CD4-positive, alpha-beta memory T cell (primary cell): ENCODE measurements at regions of chr3 and their contacts with region 1.

Region 1: DNA sequence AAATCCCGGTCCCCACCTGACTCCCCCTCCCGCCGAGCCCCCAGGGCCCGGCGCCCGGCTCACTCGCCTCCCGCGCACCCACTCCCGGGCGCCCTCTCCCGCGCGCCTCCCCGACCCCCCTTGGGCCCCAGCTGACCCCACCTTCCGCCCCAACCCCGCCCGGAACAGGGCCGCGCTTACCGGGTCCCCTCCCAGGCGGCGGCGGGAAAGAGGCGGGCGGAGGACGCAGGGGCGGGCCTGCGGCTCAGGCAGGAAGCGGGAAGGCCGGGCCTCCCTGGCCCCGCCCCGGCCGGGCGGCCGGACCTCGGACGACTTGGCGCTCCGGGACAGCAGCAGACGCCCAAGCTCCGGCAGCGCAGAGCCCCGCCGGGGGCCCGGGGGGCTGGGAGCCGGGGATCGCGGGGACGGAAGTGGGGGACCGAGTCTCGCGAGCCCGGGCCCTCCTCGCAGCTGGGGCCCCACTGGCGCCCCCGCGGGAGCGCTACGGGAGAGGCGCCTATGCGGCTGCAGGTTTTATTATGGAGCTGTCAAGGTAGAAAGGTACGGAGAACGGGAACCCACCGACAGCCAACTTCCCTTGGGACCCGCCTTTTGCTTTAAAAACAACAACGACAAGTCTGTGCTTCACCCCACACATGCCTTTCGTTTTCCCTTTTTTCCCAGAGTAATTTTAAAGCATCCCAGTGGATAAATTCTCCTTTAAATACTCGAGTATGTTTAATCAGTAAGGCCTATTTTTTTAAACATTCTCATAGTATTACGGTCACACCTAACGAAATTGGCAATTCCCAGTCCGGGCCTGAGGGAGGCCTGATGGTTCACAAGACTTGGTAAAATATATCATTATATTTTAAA is at the start of gene SLC41A3:
- DNase-seq: peak; percentile 80 to 89 (median 84)
- H3K4me3 ChIP-seq: peak within 1 kb of the TSS in 1 of 2 donors; percentile 64
- H3K4me3 Mint-ChIP-seq: peak within 1 kb of the TSS; percentile 88 to 94 (median 92)
- H3K27ac ChIP-seq: peak within 1 kb of the TSS; percentile 63
- H3K27ac Mint-ChIP-seq: peak within 1 kb of the TSS; percentile 90 to 98 (median 93)
- H3K4me1 ChIP-seq: peaks cover 26% of the 10 kb centered on the region
- H3K4me1 Mint-ChIP-seq: peaks cover 9 to 32% (median 20%) of the 10 kb centered on the region in 4 donors
- H3K27me3 ChIP-seq: no peaks in the 10 kb centered on the region
- H3K27me3 Mint-ChIP-seq: no peaks in the 10 kb centered on the region
- total RNA-seq, gene SLC41A3: 32.5 to 41.2 TPM

Region 2: DNA sequence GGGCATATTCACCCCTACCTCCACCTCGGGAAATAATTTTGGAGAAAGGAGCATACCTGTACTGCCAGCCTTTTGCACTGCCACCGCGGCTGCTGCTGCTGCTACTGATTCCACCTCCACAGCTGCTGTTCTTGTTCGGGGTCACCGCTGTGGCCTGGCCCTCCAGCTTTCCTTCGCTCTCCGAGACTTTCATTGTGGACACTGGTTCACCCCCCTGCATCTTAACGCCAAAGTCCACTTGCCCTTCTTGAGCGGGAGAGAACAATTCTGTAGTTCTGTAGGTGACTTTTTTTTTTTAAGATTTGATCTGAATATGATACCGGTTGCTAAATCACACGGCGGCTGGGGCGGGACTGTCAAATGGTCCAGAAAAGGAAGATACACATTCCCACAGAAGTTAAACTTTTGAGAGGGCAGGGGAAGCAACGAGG is 489.5 kb before region 1 on chr3:
- CTCF ChIA-PET with region 1: no interaction called
- POLR2A ChIA-PET with region 1: no interaction called
- intact Hi-C with region 1: loop called (anchors 10 kb)
- DNase-seq: peak in 1 of 5 donors; percentile 2
- H3K4me3 ChIP-seq: peak overlapping the region; percentile 43 to 80
- H3K4me3 Mint-ChIP-seq: peak overlapping the region; percentile 88 to 100 (median 98)
- H3K27ac ChIP-seq: peak overlapping the region; percentile 75
- H3K27ac Mint-ChIP-seq: peak overlapping the region; percentile 88 to 99 (median 93)
- H3K4me1 ChIP-seq: peaks cover 52% of the 10 kb centered on the region
- H3K4me1 Mint-ChIP-seq: peaks cover 25 to 55% (median 40%) of the 10 kb centered on the region in 4 donors
- H3K27me3 ChIP-seq: no peaks in the 10 kb centered on the region
- H3K27me3 Mint-ChIP-seq: no peaks in the 10 kb centered on the region

Region 3: GRCh38 chr3:125990253-125990970 is 93.7 kb before region 1 on chr3:
- CTCF ChIA-PET with region 1: interaction called, 3 read pairs
- POLR2A ChIA-PET with region 1: interaction called, 12 read pairs
- intact Hi-C with region 1: loop called (anchors 1 kb)
- DNase-seq: peak in 4 of 5 donors; percentile 73 to 79 (median 78)
- H3K4me3 ChIP-seq: peak overlapping the region; percentile 18 to 60
- H3K4me3 Mint-ChIP-seq: peak overlapping the region in 7 of 8 donors; percentile 95 to 100 (median 99)
- H3K27ac ChIP-seq: peak overlapping the region; percentile 78
- H3K27ac Mint-ChIP-seq: peak overlapping the region in 6 of 7 donors; percentile 92 to 100 (median 98)
- H3K4me1 ChIP-seq: peaks cover 16% of the 10 kb centered on the region
- H3K4me1 Mint-ChIP-seq: peaks cover 2 to 31% (median 15%) of the 10 kb centered on the region in 4 donors
- H3K27me3 ChIP-seq: no peaks in the 10 kb centered on the region
- H3K27me3 Mint-ChIP-seq: peaks cover 0 to 4% of the 10 kb centered on the region in 2 donors

Region 4: GRCh38 chr3:126475413-126476114 is 391.4 kb after region 1 on chr3 and contains the start of gene ZXDC:
- CTCF ChIA-PET with region 1: no interaction called
- POLR2A ChIA-PET with region 1: interaction called, 5 read pairs
- intact Hi-C with region 1: loop called (anchors 2 kb)
- DNase-seq: peak; percentile 90 to 93 (median 92)
- H3K4me3 ChIP-seq: peak within 1 kb of the TSS; percentile 60 to 73
- H3K4me3 Mint-ChIP-seq: peak within 1 kb of the TSS; percentile 87 to 94 (median 92)
- H3K27ac ChIP-seq: peak within 1 kb of the TSS; percentile 64
- H3K27ac Mint-ChIP-seq: peak within 1 kb of the TSS; percentile 83 to 98 (median 92)
- H3K4me1 ChIP-seq: peaks cover 36% of the 10 kb centered on the region
- H3K4me1 Mint-ChIP-seq: peaks cover 30 to 55% (median 44%) of the 10 kb centered on the region in 4 donors
- H3K27me3 ChIP-seq: no peaks in the 10 kb centered on the region
- H3K27me3 Mint-ChIP-seq: no peaks in the 10 kb centered on the region
- total RNA-seq, gene ZXDC: 58.2 to 66.3 TPM

Region 5: GRCh38 chr3:127044996-127045715 is 961.0 kb after region 1 on chr3:
- CTCF ChIA-PET with region 1: no interaction called
- POLR2A ChIA-PET with region 1: no interaction called
- intact Hi-C with region 1: no loop called
- DNase-seq: no peak
- H3K4me3 ChIP-seq: no peak overlapping the region
- H3K4me3 Mint-ChIP-seq: no peak overlapping the region
- H3K27ac ChIP-seq: no peak overlapping the region
- H3K27ac Mint-ChIP-seq: no peak overlapping the region
- H3K4me1 ChIP-seq: no peaks in the 10 kb centered on the region
- H3K4me1 Mint-ChIP-seq: no peaks in the 10 kb centered on the region
- H3K27me3 ChIP-seq: no peaks in the 10 kb centered on the region
- H3K27me3 Mint-ChIP-seq: peaks cover 7 to 10% of the 10 kb centered on the region in 2 donors

Region 6: GRCh38 chr3:127064521-127065427 is 980.6 kb after region 1 on chr3:
- CTCF ChIA-PET with region 1: no interaction called
- POLR2A ChIA-PET with region 1: no interaction called
- intact Hi-C with region 1: no loop called
- DNase-seq: no peak
- H3K4me3 ChIP-seq: no peak overlapping the region
- H3K4me3 Mint-ChIP-seq: no peak overlapping the region
- H3K27ac ChIP-seq: no peak overlapping the region
- H3K27ac Mint-ChIP-seq: no peak overlapping the region
- H3K4me1 ChIP-seq: no peaks in the 10 kb centered on the region
- H3K4me1 Mint-ChIP-seq: no peaks in the 10 kb centered on the region
- H3K27me3 ChIP-seq: no peaks in the 10 kb centered on the region
- H3K27me3 Mint-ChIP-seq: peaks cover 12 to 13% of the 10 kb centered on the region in 2 donors

Region 7: GRCh38 chr3:127544192-127544802 is 1460.2 kb after region 1 on chr3:
- CTCF ChIA-PET with region 1: no interaction called
- POLR2A ChIA-PET with region 1: no interaction called
- intact Hi-C with region 1: loop called (anchors 5 kb)
- DNase-seq: peak; percentile 49 to 56 (median 50)
- H3K4me3 ChIP-seq: no peak overlapping the region
- H3K4me3 Mint-ChIP-seq: no peak overlapping the region
- H3K27ac ChIP-seq: no peak overlapping the region
- H3K27ac Mint-ChIP-seq: peak overlapping the region in 1 of 7 donors; percentile 10
- H3K4me1 ChIP-seq: peaks cover 14% of the 10 kb centered on the region
- H3K4me1 Mint-ChIP-seq: peaks cover 3 to 25% (median 11%) of the 10 kb centered on the region in 4 donors
- H3K27me3 ChIP-seq: no peaks in the 10 kb centered on the region
- H3K27me3 Mint-ChIP-seq: peaks cover 1 to 3% of the 10 kb centered on the region in 2 donors